ENCODE measurements at regions of chr10 and their contacts with region 1.

Region 1: DNA sequence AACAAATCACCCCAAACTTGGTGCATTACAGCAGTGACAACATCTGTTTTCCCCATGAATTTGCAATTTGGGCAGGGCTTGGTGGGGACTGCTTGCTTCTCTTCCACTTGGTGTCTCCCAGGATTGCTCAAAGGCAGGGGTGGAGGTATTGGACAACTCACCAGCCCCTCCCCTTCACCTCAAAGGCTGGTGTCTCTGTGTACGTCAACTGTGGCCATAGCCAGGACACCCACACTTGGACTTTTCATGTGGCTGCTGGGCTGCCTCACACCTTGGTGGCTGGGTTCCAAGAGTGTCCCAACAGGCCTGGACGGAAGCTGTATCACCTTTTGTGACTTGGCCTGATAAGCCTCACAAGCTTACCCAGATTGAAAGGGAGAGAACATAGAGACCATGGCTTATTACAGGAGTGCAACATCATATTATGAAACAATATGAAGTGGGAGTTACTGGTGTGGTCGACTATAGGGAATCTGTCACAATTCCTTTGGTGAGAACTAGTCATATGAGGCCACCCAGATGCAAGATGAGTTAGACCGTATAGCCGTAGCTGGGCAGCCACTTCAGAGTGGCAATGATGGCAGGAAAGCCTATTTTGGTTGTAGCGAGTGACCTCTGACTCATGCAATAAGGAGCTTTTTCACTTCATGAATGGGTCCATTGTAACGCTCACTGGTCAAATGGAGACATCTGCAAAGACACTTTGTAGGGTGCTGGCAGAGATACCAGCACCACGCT is 187.6 kb upstream of the ITGB1 start:
- DNase-seq: peak; percentile 64
- H3K4me3 ChIP-seq: no peak overlapping the region
- H3K27ac ChIP-seq: no peak overlapping the region
- H3K4me1 ChIP-seq: peaks cover 16% of the 10 kb centered on the region
- H3K27me3 ChIP-seq: no peaks in the 10 kb centered on the region
- CTCF ChIP-seq: no peak

Region 2: GRCh38 chr10:33008499-33009243 is 136.9 kb before region 1 on chr10:
- CTCF ChIA-PET with region 1: no interaction called
- dilution Hi-C with region 1: no loop called
- in situ Hi-C with region 1: no loop called
- intact Hi-C with region 1: no loop called
- DNase-seq: peak; percentile 83
- H3K4me3 ChIP-seq: no peak overlapping the region
- H3K27ac ChIP-seq: peak overlapping the region; percentile 72
- H3K4me1 ChIP-seq: peaks cover 55% of the 10 kb centered on the region
- H3K27me3 ChIP-seq: no peaks in the 10 kb centered on the region
- CTCF ChIP-seq: peak; percentile 99

Region 3: GRCh38 chr10:33099748-33100147 is 45.9 kb before region 1 on chr10:
- CTCF ChIA-PET with region 1: no interaction called
- dilution Hi-C with region 1: loop called (anchors 5 kb)
- in situ Hi-C with region 1: no loop called
- intact Hi-C with region 1: no loop called
- DNase-seq: no peak
- H3K4me3 ChIP-seq: no peak overlapping the region
- H3K27ac ChIP-seq: no peak overlapping the region
- H3K4me1 ChIP-seq: peaks cover 31% of the 10 kb centered on the region
- H3K27me3 ChIP-seq: no peaks in the 10 kb centered on the region
- CTCF ChIP-seq: no peak

Region 4: DNA sequence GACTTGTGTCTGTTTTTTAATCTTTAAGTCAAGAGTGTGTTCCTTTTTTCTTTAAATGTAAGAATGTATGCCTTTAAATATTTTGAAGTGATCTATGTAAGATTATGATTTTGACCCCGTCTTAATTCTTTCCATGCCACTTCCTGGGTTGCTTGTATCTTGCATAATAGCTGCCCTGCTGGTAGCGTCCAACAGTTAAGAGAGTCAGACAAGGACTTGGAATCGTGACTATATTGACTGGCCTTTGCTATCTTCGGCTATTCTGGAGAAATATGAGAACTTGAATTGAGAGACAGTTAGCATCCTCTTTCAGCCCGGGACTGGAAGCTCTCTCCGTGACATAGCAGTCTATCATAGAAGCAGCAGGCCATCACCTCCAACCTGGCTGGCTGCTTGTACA is 175.9 kb after region 1 on chr10:
- CTCF ChIA-PET with region 1: no interaction called
- dilution Hi-C with region 1: no loop called
- in situ Hi-C with region 1: no loop called
- intact Hi-C with region 1: no loop called
- DNase-seq: no peak
- H3K4me3 ChIP-seq: no peak overlapping the region
- H3K27ac ChIP-seq: no peak overlapping the region
- H3K4me1 ChIP-seq: peaks cover 4% of the 10 kb centered on the region
- H3K27me3 ChIP-seq: no peaks in the 10 kb centered on the region
- CTCF ChIP-seq: no peak